ENCODE measurements at regions of chr3 and their contacts with region 1.

Region 1: DNA sequence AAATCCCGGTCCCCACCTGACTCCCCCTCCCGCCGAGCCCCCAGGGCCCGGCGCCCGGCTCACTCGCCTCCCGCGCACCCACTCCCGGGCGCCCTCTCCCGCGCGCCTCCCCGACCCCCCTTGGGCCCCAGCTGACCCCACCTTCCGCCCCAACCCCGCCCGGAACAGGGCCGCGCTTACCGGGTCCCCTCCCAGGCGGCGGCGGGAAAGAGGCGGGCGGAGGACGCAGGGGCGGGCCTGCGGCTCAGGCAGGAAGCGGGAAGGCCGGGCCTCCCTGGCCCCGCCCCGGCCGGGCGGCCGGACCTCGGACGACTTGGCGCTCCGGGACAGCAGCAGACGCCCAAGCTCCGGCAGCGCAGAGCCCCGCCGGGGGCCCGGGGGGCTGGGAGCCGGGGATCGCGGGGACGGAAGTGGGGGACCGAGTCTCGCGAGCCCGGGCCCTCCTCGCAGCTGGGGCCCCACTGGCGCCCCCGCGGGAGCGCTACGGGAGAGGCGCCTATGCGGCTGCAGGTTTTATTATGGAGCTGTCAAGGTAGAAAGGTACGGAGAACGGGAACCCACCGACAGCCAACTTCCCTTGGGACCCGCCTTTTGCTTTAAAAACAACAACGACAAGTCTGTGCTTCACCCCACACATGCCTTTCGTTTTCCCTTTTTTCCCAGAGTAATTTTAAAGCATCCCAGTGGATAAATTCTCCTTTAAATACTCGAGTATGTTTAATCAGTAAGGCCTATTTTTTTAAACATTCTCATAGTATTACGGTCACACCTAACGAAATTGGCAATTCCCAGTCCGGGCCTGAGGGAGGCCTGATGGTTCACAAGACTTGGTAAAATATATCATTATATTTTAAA is at the start of gene SLC41A3:
- DNase-seq: peak; percentile 98
- H3K4me3 Mint-ChIP-seq: peak within 1 kb of the TSS; percentile 73
- H3K27ac Mint-ChIP-seq: peak within 1 kb of the TSS; percentile 40
- H3K4me1 Mint-ChIP-seq: peaks cover 36% of the 10 kb centered on the region
- H3K27me3 Mint-ChIP-seq: no peaks in the 10 kb centered on the region
- CTCF ChIP-seq: peak; percentile 49
- total RNA-seq, gene SLC41A3: 69.6 and 101 TPM in 2 replicates

Region 2: DNA sequence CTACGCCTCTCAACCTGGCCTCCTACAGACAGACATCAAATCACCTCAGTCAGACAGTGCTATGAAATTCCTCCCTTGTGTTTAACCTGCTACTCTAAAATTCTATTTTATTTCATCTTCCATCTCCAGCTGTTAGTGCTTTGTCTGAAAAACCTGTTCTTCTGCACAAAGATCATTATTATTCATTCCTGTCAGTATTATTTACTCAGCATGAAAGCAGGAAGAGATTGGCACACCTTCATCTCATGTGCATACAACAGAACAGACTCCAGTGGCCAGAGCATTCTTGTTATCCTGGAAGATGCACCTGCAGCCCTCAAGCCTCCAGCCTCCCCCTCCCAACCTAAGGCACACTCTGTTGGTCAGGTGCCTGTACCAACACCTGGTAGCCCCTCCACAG is 117.0 kb before region 1 on chr3:
- CTCF ChIA-PET with region 1: interaction called, 3 read pairs
- intact Hi-C with region 1: loop called (anchors 5 kb)
- DNase-seq: no peak
- H3K4me3 Mint-ChIP-seq: no peak overlapping the region
- H3K27ac Mint-ChIP-seq: no peak overlapping the region
- H3K4me1 Mint-ChIP-seq: no peaks in the 10 kb centered on the region
- H3K27me3 Mint-ChIP-seq: peaks cover 15% of the 10 kb centered on the region
- CTCF ChIP-seq: no peak

Region 3: DNA sequence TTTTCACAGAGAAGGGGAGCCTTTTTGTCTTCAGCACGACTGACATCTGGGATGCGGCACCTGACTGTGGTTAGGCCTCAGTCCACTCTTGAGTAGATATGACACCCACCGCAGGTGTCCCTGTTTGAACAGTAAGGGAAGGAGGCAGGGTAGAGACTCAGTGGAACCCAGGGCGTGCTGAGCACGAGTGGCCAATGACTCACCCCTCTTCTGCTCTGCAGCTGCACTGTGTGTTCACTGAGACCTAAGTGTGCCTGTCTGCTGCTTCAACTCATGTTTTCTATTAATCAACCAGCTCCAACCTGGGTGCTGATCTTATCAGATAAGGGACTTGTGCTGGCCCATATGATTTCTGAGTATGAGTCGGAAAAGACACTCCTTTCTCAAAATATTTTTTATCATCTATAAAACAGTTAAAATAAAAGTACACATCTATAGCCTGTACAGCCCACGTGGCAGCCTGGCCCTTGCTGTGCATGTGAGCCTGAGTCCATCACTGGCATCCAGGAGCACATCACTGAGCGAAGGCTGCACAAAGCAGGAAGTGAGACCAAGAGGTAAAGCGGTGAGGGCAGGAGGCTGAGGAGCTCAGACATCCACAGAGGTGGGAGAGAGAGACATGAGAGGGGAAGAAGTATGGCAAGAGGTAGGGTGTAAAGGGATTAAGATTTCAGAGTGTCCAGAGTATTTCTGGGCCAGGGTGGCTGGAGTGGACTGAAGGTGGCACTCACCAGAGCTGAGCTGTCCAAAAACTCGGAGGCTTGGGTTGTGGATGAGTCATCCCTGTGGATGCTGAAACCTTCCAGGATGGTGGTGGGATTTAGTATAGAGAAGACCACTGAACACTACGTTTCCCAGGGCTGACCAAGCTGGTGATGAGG is 49.4 kb before region 1 on chr3:
- CTCF ChIA-PET with region 1: no interaction called
- intact Hi-C with region 1: no loop called
- DNase-seq: no peak
- H3K4me3 Mint-ChIP-seq: no peak overlapping the region
- H3K27ac Mint-ChIP-seq: no peak overlapping the region
- H3K4me1 Mint-ChIP-seq: peaks cover 9% of the 10 kb centered on the region
- H3K27me3 Mint-ChIP-seq: no peaks in the 10 kb centered on the region
- CTCF ChIP-seq: no peak

Region 4: GRCh38 chr3:126226374-126226773 is 142.2 kb after region 1 on chr3:
- CTCF ChIA-PET with region 1: no interaction called
- intact Hi-C with region 1: no loop called
- DNase-seq: no peak
- H3K4me3 Mint-ChIP-seq: no peak overlapping the region
- H3K27ac Mint-ChIP-seq: no peak overlapping the region
- H3K4me1 Mint-ChIP-seq: no peaks in the 10 kb centered on the region
- H3K27me3 Mint-ChIP-seq: peaks cover 17% of the 10 kb centered on the region
- CTCF ChIP-seq: no peak

Region 5: GRCh38 chr3:126326629-126327028 is 242.5 kb after region 1 on chr3:
- CTCF ChIA-PET with region 1: interaction called, 13 read pairs
- intact Hi-C with region 1: no loop called
- DNase-seq: no peak
- H3K4me3 Mint-ChIP-seq: no peak overlapping the region
- H3K27ac Mint-ChIP-seq: no peak overlapping the region
- H3K4me1 Mint-ChIP-seq: no peaks in the 10 kb centered on the region
- H3K27me3 Mint-ChIP-seq: peaks cover 63% of the 10 kb centered on the region
- CTCF ChIP-seq: no peak

Region 6: GRCh38 chr3:127374086-127375010 is 1290.2 kb after region 1 on chr3:
- CTCF ChIA-PET with region 1: no interaction called
- intact Hi-C with region 1: no loop called
- DNase-seq: peak; percentile 69
- H3K4me3 Mint-ChIP-seq: no peak overlapping the region
- H3K27ac Mint-ChIP-seq: no peak overlapping the region
- H3K4me1 Mint-ChIP-seq: no peaks in the 10 kb centered on the region
- H3K27me3 Mint-ChIP-seq: peaks cover 92% of the 10 kb centered on the region
- CTCF ChIP-seq: peak; percentile 55

Measured in Calu3 (cell line).